ENCODE measurements at regions of chr1 and their contacts with region 1.

Region 1: GRCh38 chr1:210516696-210517459 is 188.2 kb downstream of the HHAT start:
- DNase-seq: no peak
- ATAC-seq: no peak
- H3K4me3 Mint-ChIP-seq: no peak overlapping the region
- H3K27ac Mint-ChIP-seq: no peak overlapping the region
- H3K4me1 Mint-ChIP-seq: no peaks in the 10 kb centered on the region
- H3K27me3 Mint-ChIP-seq: no peaks in the 10 kb centered on the region
- CTCF ChIP-seq: no peak

Region 2: DNA sequence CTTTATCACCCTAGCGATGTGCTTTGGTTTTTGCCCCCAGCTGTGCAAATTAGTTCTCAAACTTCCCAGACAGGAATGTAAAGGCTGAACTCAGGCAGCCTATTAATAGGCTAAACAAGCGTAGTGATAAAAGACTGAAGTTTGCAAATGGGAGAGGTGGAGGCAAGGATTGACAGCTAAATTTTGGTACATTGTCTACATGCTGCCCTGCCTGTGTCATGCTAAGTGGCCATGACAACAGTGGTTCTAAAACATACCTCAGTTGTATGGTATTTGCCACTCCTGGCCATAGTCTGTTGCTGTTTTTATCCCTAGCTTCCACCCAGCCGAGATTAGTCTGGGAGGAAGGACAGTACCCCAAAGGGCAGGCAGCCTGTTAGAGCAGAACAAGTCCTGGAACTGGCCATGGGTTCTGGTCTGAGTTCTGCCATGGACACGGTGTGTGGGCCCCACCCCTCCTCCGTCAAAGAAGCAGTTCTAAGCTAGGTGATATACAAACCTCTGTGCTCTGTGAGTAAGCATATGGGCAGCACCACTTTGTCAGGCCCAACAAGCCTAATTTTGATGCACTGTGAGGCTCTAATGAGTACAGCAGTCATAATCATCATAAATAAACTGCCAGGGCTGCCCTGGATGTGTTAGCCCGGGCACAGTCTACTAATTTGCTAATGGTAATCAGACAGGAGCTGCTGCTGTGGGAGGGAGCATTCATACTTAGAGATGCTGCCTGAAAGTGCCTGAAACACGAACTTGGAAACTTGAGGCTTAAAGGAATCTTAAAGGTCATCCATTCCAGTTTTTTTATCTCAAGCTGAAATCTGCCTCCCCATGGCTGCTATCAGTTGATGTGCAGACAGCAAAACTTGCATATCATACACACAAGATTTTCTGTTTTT is 11.0 kb before region 1 on chr1:
- CTCF ChIA-PET with region 1: no interaction called
- POLR2A ChIA-PET with region 1: no interaction called
- intact Hi-C with region 1: no loop called
- DNase-seq: no peak
- ATAC-seq: no peak
- H3K4me3 Mint-ChIP-seq: no peak overlapping the region
- H3K27ac Mint-ChIP-seq: no peak overlapping the region
- H3K4me1 Mint-ChIP-seq: no peaks in the 10 kb centered on the region
- H3K27me3 Mint-ChIP-seq: no peaks in the 10 kb centered on the region
- CTCF ChIP-seq: no peak

Region 3: DNA sequence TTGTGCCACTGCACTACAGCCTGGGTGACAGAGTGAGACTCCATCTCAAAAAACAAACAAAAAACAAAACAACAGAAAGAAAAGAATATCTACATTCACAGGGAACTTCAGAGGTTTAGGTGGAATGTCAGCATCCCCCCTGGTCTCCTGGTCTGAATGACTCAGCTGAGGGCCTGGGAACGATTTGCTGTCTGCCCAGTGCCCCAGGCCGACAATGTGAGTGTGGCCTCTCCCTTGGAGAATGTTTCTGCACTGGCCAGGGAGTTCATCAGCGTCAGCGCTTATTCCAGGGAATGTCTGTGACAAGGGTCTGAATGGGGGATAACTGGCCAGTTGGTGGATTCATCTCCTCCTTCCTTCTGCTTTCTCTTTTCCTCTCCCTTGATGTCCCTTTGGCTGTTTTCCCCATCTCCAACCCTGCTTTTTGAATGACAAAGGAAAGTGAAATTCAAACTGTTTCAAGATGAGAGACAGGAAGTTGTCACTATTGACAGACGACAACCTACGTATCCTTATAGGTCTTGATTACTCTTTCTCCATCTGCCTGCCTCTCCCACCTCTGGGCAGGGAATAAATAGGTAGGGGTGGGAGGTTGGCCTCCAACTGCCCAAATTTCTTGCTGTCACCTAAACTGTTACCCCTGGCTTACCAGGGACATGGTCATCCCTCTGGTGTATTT is 24.9 kb after region 1 on chr1:
- CTCF ChIA-PET with region 1: no interaction called
- POLR2A ChIA-PET with region 1: no interaction called
- intact Hi-C with region 1: loop called (anchors 2 kb)
- DNase-seq: no peak
- ATAC-seq: no peak
- H3K4me3 Mint-ChIP-seq: no peak overlapping the region
- H3K27ac Mint-ChIP-seq: no peak overlapping the region
- H3K4me1 Mint-ChIP-seq: no peaks in the 10 kb centered on the region
- H3K27me3 Mint-ChIP-seq: no peaks in the 10 kb centered on the region
- CTCF ChIP-seq: no peak

Measured in activated B cell treated with CpG ODN at 0.5 μM for 24 hours (primary cell).